Sigmoid colon (tissue), 7 donors: ENCODE measurements at regions of chr4 and their contacts with region 1.

Region 1: DNA sequence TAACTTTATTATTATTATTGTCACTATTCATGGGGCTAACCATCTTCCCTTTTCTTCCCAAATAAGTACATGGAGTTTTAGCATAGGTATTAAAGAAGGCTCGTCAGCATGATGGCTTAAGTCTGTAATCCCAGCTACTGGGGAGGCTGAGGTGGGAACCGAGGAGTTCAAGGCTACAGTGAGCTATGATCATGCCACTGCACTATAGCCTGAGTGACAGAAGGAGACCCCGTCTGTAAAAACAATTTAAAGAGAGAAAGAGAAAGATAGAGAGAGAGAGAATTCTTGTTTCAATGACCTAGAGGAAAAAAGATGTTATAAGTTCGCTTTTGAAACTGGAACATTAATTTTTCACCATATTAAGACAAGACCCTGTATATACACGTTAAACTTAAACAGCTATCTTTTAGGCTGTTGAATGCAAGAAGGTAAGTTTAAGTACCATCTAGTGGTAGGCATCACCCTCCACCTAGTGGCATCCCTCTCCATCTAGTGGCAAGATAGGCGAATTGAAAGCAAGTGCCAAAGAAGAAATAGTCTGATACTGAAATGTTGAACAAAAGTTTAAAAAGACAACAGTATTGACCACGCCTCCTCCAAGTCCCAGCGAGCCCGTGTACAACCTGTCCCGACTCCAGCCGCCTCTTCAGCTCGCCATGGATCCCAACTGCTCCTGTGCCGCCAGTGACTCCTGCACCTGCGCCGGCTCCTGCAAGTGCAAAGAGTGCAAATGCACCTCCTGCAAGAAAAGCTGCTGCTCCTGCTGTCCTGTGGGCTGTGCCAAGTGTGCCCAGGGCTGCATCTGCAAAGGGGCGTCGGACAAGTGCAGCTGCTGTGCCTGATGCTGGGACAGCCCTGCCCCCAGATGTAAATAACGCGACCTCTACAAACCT is 26.0 kb upstream of the YTHDC1 start:
- DNase-seq: no peak
- H3K4me3 ChIP-seq: no peak overlapping the region
- H3K27ac ChIP-seq: no peak overlapping the region
- H3K4me1 ChIP-seq: peaks cover 0 to 6% (median 3%) of the 10 kb centered on the region in 4 donors
- H3K27me3 ChIP-seq: peaks cover 0 to 19% (median 0%) of the 10 kb centered on the region in 3 donors
- CTCF ChIP-seq: peak; percentile 50 to 71 (median 66)
- EP300 ChIP-seq: no peak
- POLR2A ChIP-seq: no peak

Region 2: GRCh38 chr4:68271851-68272756 is 103.8 kb before region 1 on chr4:
- intact Hi-C with region 1: loop called (anchors 2 kb)
- DNase-seq: no peak
- H3K4me3 ChIP-seq: peak overlapping the region in 2 of 4 donors; percentile 22 to 27
- H3K27ac ChIP-seq: no peak overlapping the region
- H3K4me1 ChIP-seq: no peaks in the 10 kb centered on the region
- H3K27me3 ChIP-seq: no peaks in the 10 kb centered on the region
- CTCF ChIP-seq: peak in 3 of 4 experiments; percentile 71 to 77 (median 75)
- EP300 ChIP-seq: no peak
- POLR2A ChIP-seq: no peak

Region 3: GRCh38 chr4:68349649-68350360 is 26.1 kb before region 1 on chr4 and contains the start of gene YTHDC1:
- intact Hi-C with region 1: loop called (anchors 2 kb)
- DNase-seq: peak; percentile 98
- H3K4me3 ChIP-seq: peak within 1 kb of the TSS; percentile 90 to 96 (median 94)
- H3K27ac ChIP-seq: peak within 1 kb of the TSS; percentile 97 to 99 (median 98)
- H3K4me1 ChIP-seq: peaks cover 0 to 44% (median 30%) of the 10 kb centered on the region in 4 donors
- H3K27me3 ChIP-seq: no peaks in the 10 kb centered on the region
- CTCF ChIP-seq: no peak
- EP300 ChIP-seq: peak in 2 of 4 donors; percentile 52 to 88
- POLR2A ChIP-seq: peak; percentile 94 to 95
- total RNA-seq, gene YTHDC1: 49.4 to 66.4 (median 58.7) TPM

Region 4: DNA sequence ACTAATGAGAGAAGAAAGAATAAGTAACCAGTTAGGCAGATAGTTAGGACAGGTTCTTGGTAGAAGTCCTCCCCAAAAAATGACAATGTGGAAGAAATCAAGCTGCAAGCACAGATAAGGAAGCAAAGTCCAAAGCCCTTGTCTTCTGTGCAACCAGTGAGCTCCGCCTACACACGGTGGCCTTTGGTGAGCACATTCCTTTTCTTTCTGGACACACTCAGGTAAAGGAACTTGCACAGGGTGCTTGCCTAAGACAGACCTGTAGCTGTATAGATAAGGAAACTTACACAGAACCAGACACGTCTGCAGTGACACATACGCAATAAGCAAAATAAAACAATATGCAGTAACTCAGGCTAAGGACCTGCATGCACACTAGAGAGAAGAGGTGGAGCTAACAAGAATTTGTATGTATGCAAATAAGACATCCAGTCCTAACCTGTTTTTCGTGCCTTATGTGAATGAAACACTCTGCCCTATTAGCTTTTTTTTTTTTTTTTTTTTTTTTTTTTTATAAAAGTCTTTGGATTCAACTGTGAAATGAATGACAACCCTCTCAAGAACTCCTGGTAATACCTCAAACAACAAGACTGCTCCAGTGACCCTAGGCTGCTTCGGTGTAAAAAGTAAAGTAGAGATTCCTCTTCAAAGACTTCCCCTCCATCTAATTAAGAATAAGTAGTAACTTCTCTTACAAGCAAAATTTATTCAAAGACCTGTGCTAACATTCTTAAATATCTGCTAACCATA is 488.7 kb after region 1 on chr4:
- intact Hi-C with region 1: no loop called
- DNase-seq: no peak
- H3K4me3 ChIP-seq: no peak overlapping the region
- H3K27ac ChIP-seq: no peak overlapping the region
- H3K4me1 ChIP-seq: no peaks in the 10 kb centered on the region
- H3K27me3 ChIP-seq: no peaks in the 10 kb centered on the region
- CTCF ChIP-seq: no peak
- EP300 ChIP-seq: no peak
- POLR2A ChIP-seq: no peak